Activated naive CD4-positive, alpha-beta T cell treated with anti-CD3 and anti-CD28 coated beads, Interleukin-2, amount 10 ng/mL, durations not matched to agents 7 days and 5 days (primary cell): ENCODE measurements at regions of chr11 and their contacts with region 1.

Region 1: GRCh38 chr11:44095506-44096394 is at the start of gene EXT2:
- DNase-seq: peak; percentile 88
- H3K4me3 Mint-ChIP-seq: peak within 1 kb of the TSS; percentile 85
- H3K27ac Mint-ChIP-seq: peak within 1 kb of the TSS; percentile 35
- H3K4me1 Mint-ChIP-seq: peaks cover 29% of the 10 kb centered on the region
- H3K27me3 Mint-ChIP-seq: no peaks in the 10 kb centered on the region

Region 2: GRCh38 chr11:44047931-44048431 is 47.8 kb before region 1 on chr11 and contains the start of gene ACCSL:
- CTCF ChIA-PET with region 1: no interaction called
- DNase-seq: no peak
- H3K4me3 Mint-ChIP-seq: no peak within 1 kb of the TSS
- H3K27ac Mint-ChIP-seq: no peak within 1 kb of the TSS
- H3K4me1 Mint-ChIP-seq: no peaks in the 10 kb centered on the region
- H3K27me3 Mint-ChIP-seq: peaks cover 10% of the 10 kb centered on the region

Region 3: GRCh38 chr11:44065841-44066731 is 29.7 kb before region 1 on chr11 and contains the start of gene ACCS:
- CTCF ChIA-PET with region 1: interaction called, 22 read pairs
- DNase-seq: peak; percentile 95
- H3K4me3 Mint-ChIP-seq: peak within 1 kb of the TSS; percentile 82
- H3K27ac Mint-ChIP-seq: peak within 1 kb of the TSS; percentile 90
- H3K4me1 Mint-ChIP-seq: peaks cover 37% of the 10 kb centered on the region
- H3K27me3 Mint-ChIP-seq: no peaks in the 10 kb centered on the region

Region 4: GRCh38 chr11:44071157-44071556 is 24.6 kb before region 1 on chr11:
- CTCF ChIA-PET with region 1: interaction called, 22 read pairs
- DNase-seq: no peak
- H3K4me3 Mint-ChIP-seq: no peak overlapping the region
- H3K27ac Mint-ChIP-seq: no peak overlapping the region
- H3K4me1 Mint-ChIP-seq: peaks cover 17% of the 10 kb centered on the region
- H3K27me3 Mint-ChIP-seq: no peaks in the 10 kb centered on the region

Region 5: DNA sequence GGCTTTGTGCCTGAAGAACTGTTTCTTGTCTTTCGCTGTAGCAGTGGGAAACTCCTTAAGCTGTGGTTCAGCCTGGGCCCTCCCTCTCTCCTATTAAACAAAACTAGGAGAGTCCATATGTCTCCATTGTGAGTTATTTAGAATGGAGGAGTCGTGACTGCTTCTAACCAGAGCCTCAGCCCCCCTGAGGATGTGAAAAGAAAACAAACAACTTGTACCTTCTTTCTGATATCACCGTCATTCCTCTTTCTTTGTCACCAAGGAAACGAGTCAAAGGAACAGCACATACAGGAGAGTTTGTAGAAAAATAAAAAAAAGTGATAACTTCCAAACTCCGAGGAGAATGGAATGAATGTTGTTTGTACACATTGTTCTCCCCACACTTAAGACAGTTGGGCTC is 11.8 kb before region 1 on chr11:
- CTCF ChIA-PET with region 1: interaction called, 23 read pairs
- DNase-seq: no peak
- H3K4me3 Mint-ChIP-seq: no peak overlapping the region
- H3K27ac Mint-ChIP-seq: no peak overlapping the region
- H3K4me1 Mint-ChIP-seq: peaks cover 7% of the 10 kb centered on the region
- H3K27me3 Mint-ChIP-seq: no peaks in the 10 kb centered on the region

Region 6: GRCh38 chr11:44110231-44110679 is 14.5 kb after region 1 on chr11:
- CTCF ChIA-PET with region 1: interaction called, 81 read pairs
- DNase-seq: peak; percentile 68
- H3K4me3 Mint-ChIP-seq: no peak overlapping the region
- H3K27ac Mint-ChIP-seq: no peak overlapping the region
- H3K4me1 Mint-ChIP-seq: peaks cover 6% of the 10 kb centered on the region
- H3K27me3 Mint-ChIP-seq: no peaks in the 10 kb centered on the region

Region 7: GRCh38 chr11:44143943-44144909 is 48.5 kb after region 1 on chr11:
- CTCF ChIA-PET with region 1: no interaction called
- DNase-seq: no peak
- H3K4me3 Mint-ChIP-seq: no peak overlapping the region
- H3K27ac Mint-ChIP-seq: no peak overlapping the region
- H3K4me1 Mint-ChIP-seq: no peaks in the 10 kb centered on the region
- H3K27me3 Mint-ChIP-seq: no peaks in the 10 kb centered on the region

Region 8: GRCh38 chr11:44223238-44223637 is 127.5 kb after region 1 on chr11:
- CTCF ChIA-PET with region 1: no interaction called
- DNase-seq: no peak
- H3K4me3 Mint-ChIP-seq: no peak overlapping the region
- H3K27ac Mint-ChIP-seq: no peak overlapping the region
- H3K4me1 Mint-ChIP-seq: peaks cover 10% of the 10 kb centered on the region
- H3K27me3 Mint-ChIP-seq: no peaks in the 10 kb centered on the region